Right cardiac atrium (tissue), 5 donors: ENCODE measurements at regions of chr11 and their contacts with region 1.

Region 1: GRCh38 chr11:56783448-56784041 is 35.0 kb upstream of the OR9G4 start:
- DNase-seq: no peak
- ATAC-seq: no peak
- H3K4me3 ChIP-seq: no peak overlapping the region
- H3K27ac ChIP-seq: no peak overlapping the region
- H3K4me1 ChIP-seq: no peaks in the 10 kb centered on the region
- H3K27me3 ChIP-seq: no peaks in the 10 kb centered on the region

Region 2: GRCh38 chr11:55936300-55936699 is 847.2 kb before region 1 on chr11 and contains the start of gene OR5I1:
- intact Hi-C with region 1: loop called in 1 of 4 experiments (anchors 5 kb)
- DNase-seq: no peak
- ATAC-seq: no peak
- H3K4me3 ChIP-seq: no peak within 1 kb of the TSS
- H3K27ac ChIP-seq: no peak within 1 kb of the TSS
- H3K4me1 ChIP-seq: no peaks in the 10 kb centered on the region
- H3K27me3 ChIP-seq: no peaks in the 10 kb centered on the region
- total RNA-seq, gene OR5I1: not detected

Region 3: GRCh38 chr11:56486801-56487200 is 296.7 kb before region 1 on chr11:
- intact Hi-C with region 1: no loop called
- DNase-seq: no peak
- ATAC-seq: no peak
- H3K4me3 ChIP-seq: no peak overlapping the region
- H3K27ac ChIP-seq: no peak overlapping the region
- H3K4me1 ChIP-seq: no peaks in the 10 kb centered on the region
- H3K27me3 ChIP-seq: no peaks in the 10 kb centered on the region

Region 4: GRCh38 chr11:56577621-56578020 is 205.9 kb before region 1 on chr11 and contains the start of gene OR5M10:
- intact Hi-C with region 1: no loop called
- DNase-seq: no peak
- ATAC-seq: no peak
- H3K4me3 ChIP-seq: no peak within 1 kb of the TSS
- H3K27ac ChIP-seq: no peak within 1 kb of the TSS
- H3K4me1 ChIP-seq: no peaks in the 10 kb centered on the region
- H3K27me3 ChIP-seq: no peaks in the 10 kb centered on the region
- total RNA-seq, gene OR5M10: not detected